Esophagus squamous epithelium (tissue), 5 donors: ENCODE measurements at regions of chr2 and their contacts with region 1.

Region 1: GRCh38 chr2:118723394-118723793 is 124.1 kb downstream of the EN1 start:
- DNase-seq: no peak
- H3K4me3 ChIP-seq: no peak overlapping the region
- H3K27ac ChIP-seq: no peak overlapping the region
- H3K4me1 ChIP-seq: no peaks in the 10 kb centered on the region
- H3K27me3 ChIP-seq: no peaks in the 10 kb centered on the region
- CTCF ChIP-seq: no peak
- POLR2A ChIP-seq: no peak

Region 2: GRCh38 chr2:118249531-118249930 is 473.9 kb before region 1 on chr2:
- intact Hi-C with region 1: no loop called
- DNase-seq: no peak
- H3K4me3 ChIP-seq: no peak overlapping the region
- H3K27ac ChIP-seq: no peak overlapping the region
- H3K4me1 ChIP-seq: no peaks in the 10 kb centered on the region
- H3K27me3 ChIP-seq: peaks cover 0 to 15% (median 0%) of the 10 kb centered on the region in 4 donors
- CTCF ChIP-seq: no peak
- POLR2A ChIP-seq: no peak

Region 3: DNA sequence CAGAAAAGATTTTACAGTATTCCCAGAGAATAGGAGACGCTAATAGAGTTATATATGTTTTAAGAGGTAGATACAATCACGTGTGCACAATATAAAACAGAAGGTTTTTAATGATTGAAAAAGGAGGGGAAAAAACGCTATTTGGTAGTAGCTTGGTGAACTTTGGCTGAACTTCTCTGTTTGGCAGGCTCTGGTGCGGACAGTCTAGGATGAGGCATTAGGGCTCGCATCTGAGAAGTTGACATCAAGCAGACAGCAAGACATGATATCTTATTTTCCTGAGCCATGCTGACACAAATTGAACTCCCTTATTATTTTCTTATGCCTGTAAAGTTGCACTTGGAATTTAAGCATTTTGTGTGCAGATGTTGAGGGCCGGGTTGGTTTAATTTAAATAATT is 52.6 kb before region 1 on chr2:
- intact Hi-C with region 1: loop called (anchors 10 kb)
- DNase-seq: no peak
- H3K4me3 ChIP-seq: no peak overlapping the region
- H3K27ac ChIP-seq: no peak overlapping the region
- H3K4me1 ChIP-seq: peaks cover 0 to 25% (median 0%) of the 10 kb centered on the region in 3 donors
- H3K27me3 ChIP-seq: no peaks in the 10 kb centered on the region
- CTCF ChIP-seq: no peak
- POLR2A ChIP-seq: no peak